CD4-positive, alpha-beta T cell (primary cell): ENCODE measurements at regions of chr20 and their contacts with region 1.

Region 1: DNA sequence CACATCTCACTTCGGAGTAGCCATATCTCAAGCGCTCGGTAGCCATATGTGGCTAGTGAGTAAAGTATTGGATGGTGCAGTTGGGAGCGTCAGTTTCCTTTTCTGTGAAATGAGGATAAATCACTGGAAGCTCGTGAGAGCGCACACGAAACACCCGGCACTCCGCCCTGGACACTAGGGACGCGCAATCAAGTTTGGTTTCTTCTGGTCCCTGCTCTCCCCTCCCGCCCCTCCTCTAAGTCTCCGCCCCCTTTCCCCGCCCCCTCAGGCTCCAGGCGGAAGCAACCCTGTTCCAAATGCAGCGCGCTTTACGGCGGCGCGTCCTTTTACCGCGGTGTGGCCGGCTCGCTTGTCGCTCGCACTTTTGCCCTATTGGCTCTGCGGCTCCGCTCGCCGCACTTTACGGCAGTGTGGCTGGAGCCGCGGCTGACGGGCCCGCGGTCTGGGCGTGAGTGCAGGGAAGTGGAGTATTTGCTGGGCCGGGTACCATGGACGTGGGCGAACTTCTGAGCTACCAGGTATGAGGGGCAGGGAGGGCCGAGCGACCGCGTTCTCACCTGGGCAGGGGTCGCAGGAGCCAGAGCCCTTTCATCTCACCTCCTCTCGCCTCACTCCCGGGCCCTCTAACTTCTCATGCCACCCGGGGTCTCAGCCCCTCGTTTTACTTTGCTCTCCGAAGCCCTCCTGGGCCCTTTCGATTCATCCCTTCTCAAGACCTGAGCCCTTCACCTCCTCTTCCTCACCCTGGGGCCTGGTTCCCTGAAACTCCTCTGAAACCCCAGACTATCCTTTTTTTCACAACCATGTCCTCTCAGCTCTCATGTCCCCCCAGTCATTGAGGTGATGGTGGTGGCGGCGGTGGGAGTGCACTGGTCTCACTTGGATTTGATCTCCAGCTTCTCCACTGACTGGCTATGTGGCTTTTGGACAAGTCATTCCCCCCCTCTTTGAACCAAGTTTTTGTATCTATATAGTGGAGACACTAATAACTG is at the start of gene CTNNBL1:
- DNase-seq: peak; percentile 90 to 98 (median 95)
- ATAC-seq: peak; percentile 98
- H3K4me3 ChIP-seq: peak within 1 kb of the TSS; percentile 98
- H3K4me3 Mint-ChIP-seq: peak within 1 kb of the TSS; percentile 96
- H3K27ac ChIP-seq: peak within 1 kb of the TSS; percentile 29 to 53
- H3K27ac Mint-ChIP-seq: peak within 1 kb of the TSS; percentile 91
- H3K4me1 ChIP-seq: peaks cover 15% of the 10 kb centered on the region
- H3K4me1 Mint-ChIP-seq: peaks cover 52% of the 10 kb centered on the region
- H3K27me3 ChIP-seq: peaks cover 9% of the 10 kb centered on the region in 2 experiments
- H3K27me3 Mint-ChIP-seq: peaks cover 9% of the 10 kb centered on the region
- CTCF ChIP-seq: no peak
- total RNA-seq, gene CTNNBL1: 31.1 to 33.4 TPM

Region 2: GRCh38 chr20:36064658-36065426 is 1629.1 kb before region 1 on chr20:
- CTCF ChIA-PET with region 1: no interaction called
- POLR2A ChIA-PET with region 1: no interaction called
- intact Hi-C with region 1: loop called in 1 of 2 experiments (anchors 10 kb)
- DNase-seq: peak; percentile 86 to 97 (median 94)
- ATAC-seq: peak; percentile 98
- H3K4me3 ChIP-seq: peak overlapping the region; percentile 78
- H3K4me3 Mint-ChIP-seq: peak overlapping the region; percentile 90
- H3K27ac ChIP-seq: peak overlapping the region in 1 of 2 donors; percentile 11
- H3K27ac Mint-ChIP-seq: no peak overlapping the region
- H3K4me1 ChIP-seq: peaks cover 19% of the 10 kb centered on the region
- H3K4me1 Mint-ChIP-seq: peaks cover 5% of the 10 kb centered on the region
- H3K27me3 ChIP-seq: no peaks in the 10 kb centered on the region
- H3K27me3 Mint-ChIP-seq: no peaks in the 10 kb centered on the region
- CTCF ChIP-seq: no peak

Region 3: GRCh38 chr20:37288091-37288490 is 405.8 kb before region 1 on chr20:
- CTCF ChIA-PET with region 1: no interaction called
- POLR2A ChIA-PET with region 1: no interaction called
- intact Hi-C with region 1: loop called in 1 of 2 experiments (anchors 5 kb)
- DNase-seq: peak in 2 of 14 experiments; percentile 43 to 53
- ATAC-seq: no peak
- H3K4me3 ChIP-seq: no peak overlapping the region
- H3K4me3 Mint-ChIP-seq: peak overlapping the region; percentile 98
- H3K27ac ChIP-seq: no peak overlapping the region
- H3K27ac Mint-ChIP-seq: peak overlapping the region; percentile 96
- H3K4me1 ChIP-seq: peaks cover 24% of the 10 kb centered on the region
- H3K4me1 Mint-ChIP-seq: peaks cover 30% of the 10 kb centered on the region
- H3K27me3 ChIP-seq: no peaks in the 10 kb centered on the region
- H3K27me3 Mint-ChIP-seq: peaks cover 9% of the 10 kb centered on the region
- CTCF ChIP-seq: no peak

Region 4: GRCh38 chr20:38033310-38034107 is 339.6 kb after region 1 on chr20 and contains the starts of genes RPRD1B and TTI1:
- CTCF ChIA-PET with region 1: no interaction called
- POLR2A ChIA-PET with region 1: no interaction called
- intact Hi-C with region 1: loop called in 1 of 2 experiments (anchors 2 kb)
- DNase-seq: peak; percentile 74 to 94 (median 84)
- ATAC-seq: peak; percentile 84
- H3K4me3 ChIP-seq: peak within 1 kb of the TSS; percentile 79
- H3K4me3 Mint-ChIP-seq: peak within 1 kb of the TSS; percentile 99
- H3K27ac ChIP-seq: peak within 1 kb of the TSS; percentile 92 to 98
- H3K27ac Mint-ChIP-seq: peak within 1 kb of the TSS; percentile 100
- H3K4me1 ChIP-seq: peaks cover 38% of the 10 kb centered on the region
- H3K4me1 Mint-ChIP-seq: peaks cover 85% of the 10 kb centered on the region
- H3K27me3 ChIP-seq: no peaks in the 10 kb centered on the region
- H3K27me3 Mint-ChIP-seq: no peaks in the 10 kb centered on the region
- CTCF ChIP-seq: no peak
- total RNA-seq, gene RPRD1B: 54.8 to 55.7 TPM
- total RNA-seq, gene TTI1: 10.6 to 11.4 TPM

Region 5: DNA sequence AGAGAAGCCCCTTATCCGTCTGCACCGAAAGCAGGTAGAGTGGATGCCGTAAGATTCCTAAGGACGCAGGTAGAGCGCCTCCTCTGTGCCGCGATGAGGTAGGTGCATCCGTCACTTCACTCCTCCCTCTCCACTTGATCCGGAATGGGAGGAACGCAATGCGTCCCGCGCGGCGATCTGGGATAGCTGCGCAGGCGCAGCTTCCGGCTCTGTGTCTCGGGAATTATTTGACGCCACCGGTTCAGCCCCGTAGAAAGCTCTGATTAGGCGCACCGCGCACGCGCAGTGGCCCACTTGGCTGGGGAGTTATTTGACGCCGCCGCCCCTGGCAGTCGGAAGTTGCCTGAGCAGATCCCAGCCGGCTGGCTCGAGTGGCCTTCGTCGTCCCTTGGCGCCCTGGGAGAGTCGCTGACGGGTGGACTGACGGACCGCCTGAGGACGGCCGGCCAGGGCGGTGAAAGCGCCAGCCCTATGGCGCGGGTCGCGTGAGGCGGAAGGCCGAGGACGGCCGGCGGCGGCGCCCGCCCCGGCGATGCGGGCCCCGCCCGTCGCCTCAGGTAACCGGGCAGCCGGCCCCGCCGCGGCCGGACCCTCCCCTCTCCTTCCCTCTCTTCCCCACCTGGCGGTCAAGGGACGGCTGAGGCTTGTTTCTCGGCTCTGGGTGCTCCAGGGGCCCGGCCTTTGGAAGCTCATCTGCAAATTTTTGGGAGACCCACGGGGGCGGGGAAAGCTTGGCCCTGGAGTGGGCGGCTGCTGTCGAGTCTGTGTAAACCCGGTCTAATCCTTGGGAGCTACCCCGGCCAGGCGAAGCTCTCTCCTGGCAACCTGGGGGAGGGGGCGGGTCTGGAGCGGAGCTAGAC is 778.8 kb after region 1 on chr20 and contains the start of gene RALGAPB:
- CTCF ChIA-PET with region 1: no interaction called
- POLR2A ChIA-PET with region 1: no interaction called
- intact Hi-C with region 1: loop called in 1 of 2 experiments (anchors 5 kb)
- DNase-seq: peak; percentile 96 to 100 (median 98)
- ATAC-seq: peak; percentile 95
- H3K4me3 ChIP-seq: peak within 1 kb of the TSS; percentile 84
- H3K4me3 Mint-ChIP-seq: peak within 1 kb of the TSS; percentile 89
- H3K27ac ChIP-seq: peak within 1 kb of the TSS; percentile 37 to 81
- H3K27ac Mint-ChIP-seq: peak within 1 kb of the TSS; percentile 88
- H3K4me1 ChIP-seq: peaks cover 27% of the 10 kb centered on the region
- H3K4me1 Mint-ChIP-seq: peaks cover 58% of the 10 kb centered on the region
- H3K27me3 ChIP-seq: peaks cover 0 to 3% of the 10 kb centered on the region in 2 experiments
- H3K27me3 Mint-ChIP-seq: no peaks in the 10 kb centered on the region
- CTCF ChIP-seq: peak; percentile 61
- total RNA-seq, gene RALGAPB: 30.4 to 31.9 TPM